GM10248 (cell line): ENCODE measurements at regions of chr4 and their contacts with region 1.

Region 1: GRCh38 chr4:114547340-114548134 is 51.1 kb upstream of the UGT8 start:
- DNase-seq: no peak
- CTCF ChIP-seq: no peak

Region 2: GRCh38 chr4:114250439-114250891 is 297.1 kb before region 1 on chr4:
- CTCF ChIA-PET with region 1: no interaction called
- POLR2A ChIA-PET with region 1: no interaction called
- DNase-seq: no peak
- CTCF ChIP-seq: no peak

Region 3: DNA sequence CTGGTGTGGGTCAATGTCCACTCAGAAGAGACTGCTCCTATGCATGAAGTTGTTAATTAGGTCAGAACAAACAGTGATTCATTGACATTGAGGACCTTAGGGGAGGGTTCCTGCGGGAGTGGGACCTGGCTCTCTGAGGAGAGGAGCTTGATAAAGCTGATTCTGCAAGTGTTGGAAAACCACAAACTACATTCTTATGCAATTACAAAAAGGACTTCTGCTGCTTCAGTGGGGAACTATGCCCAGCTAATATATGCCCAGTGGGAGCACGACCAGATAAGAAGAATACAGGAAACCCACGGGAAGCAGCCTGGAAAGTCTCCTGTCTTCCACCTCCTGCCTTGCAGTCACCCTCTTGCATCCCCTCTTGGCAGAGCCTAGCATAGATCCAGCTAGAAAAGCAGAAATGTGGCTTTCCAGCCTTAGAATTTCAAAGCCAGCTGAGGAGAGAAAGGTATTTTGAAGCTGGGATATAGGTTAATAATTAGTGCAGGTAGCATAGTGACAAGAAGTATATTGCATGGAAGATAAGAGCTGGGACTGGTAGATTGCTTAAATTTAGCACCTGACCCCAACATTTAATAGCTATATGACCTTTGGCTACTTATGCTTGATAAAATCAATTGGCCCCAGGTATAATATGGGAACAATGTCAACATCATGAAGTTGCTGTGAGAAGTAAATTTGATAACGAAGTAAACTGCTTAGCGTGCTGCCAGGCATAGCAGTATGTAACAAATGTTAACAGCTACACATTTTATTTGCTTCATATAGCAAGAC is 16.2 kb after region 1 on chr4:
- CTCF ChIA-PET with region 1: interaction called, 10 read pairs
- POLR2A ChIA-PET with region 1: no interaction called
- DNase-seq: no peak
- CTCF ChIP-seq: no peak

Region 4: DNA sequence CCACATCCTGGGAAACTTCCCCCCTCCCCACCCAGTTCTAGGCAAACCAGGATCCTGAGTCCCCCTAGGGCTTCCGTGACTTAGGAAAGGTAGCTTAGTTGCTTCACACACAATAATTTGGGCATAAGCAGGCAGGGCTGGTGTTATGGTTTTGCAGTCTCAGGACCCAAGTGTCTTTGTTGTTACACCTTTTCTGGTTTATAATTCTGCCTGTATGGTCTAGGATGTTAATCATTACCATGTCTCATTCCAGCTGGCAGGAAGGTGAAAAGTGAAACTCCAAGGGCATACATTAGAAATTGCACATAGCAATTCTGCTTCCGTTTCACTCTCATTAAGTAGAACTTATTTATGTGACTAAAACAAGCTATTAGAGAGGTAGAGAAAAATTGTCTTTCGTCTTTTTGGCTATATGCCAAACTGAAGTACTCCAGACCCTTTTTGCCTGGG is 67.9 kb after region 1 on chr4:
- CTCF ChIA-PET with region 1: no interaction called
- POLR2A ChIA-PET with region 1: no interaction called
- DNase-seq: no peak
- CTCF ChIP-seq: no peak